BJ (cell line): ENCODE measurements at regions of chr12 and their contacts with region 1.

Region 1: DNA sequence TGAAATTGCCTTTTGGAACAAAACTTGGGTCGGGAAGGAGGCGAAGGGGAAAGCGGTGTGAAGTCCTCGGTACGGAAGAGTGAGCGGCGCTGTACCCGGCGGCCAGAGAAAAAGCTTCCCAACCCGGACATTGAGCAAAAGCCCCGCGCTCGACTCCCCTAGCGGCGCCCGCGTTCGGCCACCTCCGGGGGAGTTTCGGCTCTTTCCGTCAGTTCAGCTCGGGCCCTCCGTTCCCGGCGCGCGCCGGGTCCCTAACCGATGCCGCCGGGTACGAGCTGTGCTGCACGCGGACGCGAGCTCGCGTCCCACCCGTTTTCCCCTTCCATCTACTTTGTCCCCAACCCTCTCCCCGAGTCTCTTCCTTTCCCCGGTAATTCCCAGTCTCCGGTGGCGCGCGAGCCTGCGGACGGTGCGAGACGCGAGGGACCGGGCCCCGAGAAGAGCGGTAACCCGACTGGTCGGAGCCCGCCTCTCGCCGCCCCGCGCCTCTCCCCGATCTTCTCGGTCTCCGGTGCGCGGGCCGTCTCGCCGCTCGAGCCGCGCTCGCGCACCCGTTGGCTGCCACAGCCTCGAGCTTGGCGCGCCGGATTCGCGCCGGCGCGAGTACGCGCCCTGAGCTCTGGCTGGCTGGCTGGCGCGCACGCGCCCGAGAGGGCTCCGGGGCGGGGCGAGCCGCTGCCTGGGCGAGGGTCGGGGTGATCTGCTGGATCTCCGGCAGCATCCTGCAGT is 446 bp upstream of the SPATS2 start:
- DNase-seq: peak; percentile 70
- H3K4me3 ChIP-seq: peak overlapping the region; percentile 73
- H3K27me3 ChIP-seq: no peaks in the 10 kb centered on the region
- CTCF ChIP-seq: peak; percentile 41

Region 2: DNA sequence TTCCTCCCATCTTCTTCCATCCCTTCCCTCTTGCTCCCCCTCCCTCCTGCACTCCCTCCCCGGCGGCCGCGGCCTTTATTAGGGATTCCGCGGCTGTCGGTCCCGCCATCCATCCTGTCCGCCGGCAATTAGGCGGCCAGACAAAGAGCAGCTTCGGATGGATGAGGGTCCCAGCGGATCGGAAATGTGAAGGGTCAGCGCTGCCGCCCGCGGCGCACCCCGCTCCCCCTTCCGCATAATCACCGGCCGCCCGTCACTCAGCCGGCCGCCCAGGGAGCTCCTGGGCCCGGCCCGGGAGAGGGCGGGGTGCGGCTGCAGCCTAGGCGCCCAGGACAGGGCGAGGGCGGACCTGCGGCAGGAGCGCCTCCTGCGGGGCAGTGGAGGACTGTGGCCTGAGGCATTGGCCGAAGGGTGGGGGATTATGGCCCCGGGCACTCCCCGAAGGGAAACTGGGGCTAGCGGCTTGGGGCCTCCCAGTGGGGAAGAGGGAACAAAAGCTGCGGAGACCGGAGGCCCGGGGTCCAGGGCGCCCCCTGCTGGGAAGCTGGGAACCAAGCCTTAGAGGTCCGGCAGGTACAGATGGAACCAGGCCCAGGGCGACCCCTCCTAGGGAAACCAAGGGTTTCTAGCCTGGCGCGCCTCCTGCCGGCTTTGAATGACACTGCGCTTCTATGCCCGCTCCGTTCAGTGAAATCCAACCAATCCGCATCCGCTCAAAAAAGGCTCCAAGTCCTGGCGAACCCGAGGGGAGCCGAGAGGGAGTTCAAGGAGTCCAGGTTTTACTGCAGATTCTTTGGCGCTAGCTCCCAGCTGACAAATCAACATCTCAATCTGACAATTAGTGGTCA is 24.5 kb before region 1 on chr12:
- CTCF ChIA-PET with region 1: interaction called, 32 read pairs
- POLR2A ChIA-PET with region 1: no interaction called
- DNase-seq: no peak
- H3K4me3 ChIP-seq: peak overlapping the region; percentile 29
- H3K27me3 ChIP-seq: peaks cover 60% of the 10 kb centered on the region
- CTCF ChIP-seq: peak; percentile 86

Region 3: GRCh38 chr12:49347384-49348237 is 19.2 kb before region 1 on chr12:
- CTCF ChIA-PET with region 1: interaction called, 32 read pairs
- POLR2A ChIA-PET with region 1: no interaction called
- DNase-seq: no peak
- H3K4me3 ChIP-seq: peak overlapping the region; percentile 31
- H3K27me3 ChIP-seq: peaks cover 34% of the 10 kb centered on the region
- CTCF ChIP-seq: peak; percentile 95